CD8-positive, alpha-beta T cell (primary cell): ENCODE measurements at regions of chr19 and their contacts with region 1.

Region 1: GRCh38 chr19:55407800-55408532 is 378 bp upstream of the UBE2S start:
- DNase-seq: peak; percentile 94 to 100 (median 96)
- ATAC-seq: peak; percentile 88
- H3K4me3 ChIP-seq: peak overlapping the region; percentile 64 to 70
- H3K4me3 Mint-ChIP-seq: peak overlapping the region; percentile 95
- H3K27ac ChIP-seq: peak overlapping the region; percentile 98 to 99
- H3K27ac Mint-ChIP-seq: peak overlapping the region; percentile 99
- H3K4me1 ChIP-seq: peaks cover 21% of the 10 kb centered on the region
- H3K4me1 Mint-ChIP-seq: peaks cover 27% of the 10 kb centered on the region
- H3K27me3 ChIP-seq: no peaks in the 10 kb centered on the region
- H3K27me3 Mint-ChIP-seq: no peaks in the 10 kb centered on the region
- CTCF ChIP-seq: no peak

Region 2: GRCh38 chr19:54709212-54709948 is 698.6 kb before region 1 on chr19:
- CTCF ChIA-PET with region 1: no interaction called
- POLR2A ChIA-PET with region 1: no interaction called
- intact Hi-C with region 1: no loop called
- DNase-seq: no peak
- ATAC-seq: no peak
- H3K4me3 ChIP-seq: no peak overlapping the region
- H3K4me3 Mint-ChIP-seq: no peak overlapping the region
- H3K27ac ChIP-seq: no peak overlapping the region
- H3K27ac Mint-ChIP-seq: no peak overlapping the region
- H3K4me1 ChIP-seq: peaks cover 8% of the 10 kb centered on the region
- H3K4me1 Mint-ChIP-seq: peaks cover 11% of the 10 kb centered on the region
- H3K27me3 ChIP-seq: peaks cover 0 to 2% of the 10 kb centered on the region in 2 experiments
- H3K27me3 Mint-ChIP-seq: peaks cover 18% of the 10 kb centered on the region
- CTCF ChIP-seq: no peak

Region 3: DNA sequence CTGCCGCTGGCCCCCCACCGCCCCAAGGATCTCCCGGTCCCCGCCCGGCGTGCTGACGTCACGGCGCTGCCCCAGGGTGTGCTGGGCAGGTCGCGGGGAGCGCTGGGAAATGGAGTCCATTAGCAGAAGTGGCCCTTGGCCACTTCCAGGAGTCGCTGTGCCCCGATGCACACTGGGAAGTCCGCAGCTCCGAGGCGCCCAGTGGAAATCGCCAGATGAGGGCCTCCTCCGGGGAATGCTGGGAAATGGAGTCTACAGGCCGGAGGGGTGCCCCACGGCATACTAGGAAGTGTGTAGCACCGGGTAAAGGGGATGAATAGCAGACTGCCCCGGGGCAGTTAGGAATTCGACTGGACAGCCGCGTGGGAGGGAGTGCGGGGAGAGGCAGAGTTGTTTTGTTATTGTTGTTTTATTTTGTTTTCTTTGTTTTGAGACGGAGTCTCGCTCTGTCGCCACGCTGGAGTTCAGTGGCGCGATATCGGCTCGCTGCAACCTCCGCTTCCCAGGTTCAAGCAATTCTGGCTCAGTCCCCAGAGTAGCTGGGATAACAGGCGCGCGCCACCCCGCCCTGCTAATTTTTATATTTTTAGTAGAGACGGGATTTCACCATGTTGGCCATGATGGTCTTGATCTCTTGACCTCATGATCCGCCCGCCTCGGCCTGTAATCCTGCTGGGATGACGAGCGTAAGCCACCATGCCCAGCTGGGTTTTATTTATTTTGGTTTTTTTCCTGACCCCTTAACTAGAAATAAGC is 290.2 kb before region 1 on chr19 and contains the start of gene PPP1R12C:
- CTCF ChIA-PET with region 1: no interaction called
- POLR2A ChIA-PET with region 1: interaction called, 3 read pairs
- intact Hi-C with region 1: loop called in 1 of 2 experiments (anchors 1 kb)
- DNase-seq: peak; percentile 89 to 99 (median 97)
- ATAC-seq: peak; percentile 89
- H3K4me3 ChIP-seq: peak within 1 kb of the TSS; percentile 83 to 89
- H3K4me3 Mint-ChIP-seq: peak within 1 kb of the TSS; percentile 97
- H3K27ac ChIP-seq: peak within 1 kb of the TSS; percentile 61 to 84
- H3K27ac Mint-ChIP-seq: peak within 1 kb of the TSS; percentile 93
- H3K4me1 ChIP-seq: peaks cover 19% of the 10 kb centered on the region
- H3K4me1 Mint-ChIP-seq: peaks cover 34% of the 10 kb centered on the region
- H3K27me3 ChIP-seq: no peaks in the 10 kb centered on the region
- H3K27me3 Mint-ChIP-seq: no peaks in the 10 kb centered on the region
- CTCF ChIP-seq: no peak
- total RNA-seq, gene PPP1R12C: 93.8 to 97.6 TPM

Region 4: DNA sequence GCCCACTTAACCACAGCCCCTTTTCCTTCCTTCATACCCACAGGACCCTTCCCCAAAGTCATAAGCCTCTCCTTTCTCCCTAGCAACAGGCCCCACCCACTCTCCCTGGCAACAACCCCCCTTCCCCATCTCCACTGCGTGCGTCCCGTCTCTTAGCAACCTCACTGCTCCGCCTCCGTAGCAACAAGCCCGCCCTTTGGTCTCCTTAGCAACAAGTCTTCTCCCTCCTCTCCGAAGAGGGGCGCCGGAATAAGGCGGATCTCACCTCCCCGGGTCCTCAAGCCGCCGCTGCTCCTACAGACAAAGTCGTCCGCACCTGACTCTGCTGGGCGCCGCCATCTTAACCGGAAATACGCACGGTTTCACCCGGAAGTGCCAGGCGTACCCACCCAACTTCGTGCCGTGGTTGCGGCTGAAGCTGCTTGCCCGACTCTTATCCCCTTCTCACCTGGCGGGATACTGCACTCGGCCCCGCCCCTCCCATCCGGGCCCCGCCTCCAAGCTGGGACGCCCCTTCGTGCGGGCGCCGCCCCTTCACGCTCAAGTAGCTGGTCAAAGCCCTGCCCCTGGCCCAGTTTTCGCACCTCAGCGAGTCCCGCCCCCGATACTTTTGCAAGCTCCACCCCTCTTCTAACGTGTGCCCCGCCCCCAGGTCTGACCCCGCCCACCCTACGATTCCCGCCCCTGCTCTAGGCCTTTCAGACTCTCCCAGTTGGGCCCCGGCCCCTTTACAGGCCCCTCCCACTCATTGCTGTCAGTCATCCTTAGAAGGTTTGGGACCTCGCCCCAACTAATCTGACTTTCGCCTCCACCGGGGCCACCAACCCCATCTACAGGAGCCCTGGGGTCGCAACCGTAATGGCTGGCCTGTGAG is 128.0 kb before region 1 on chr19 and contains the start of gene HSPBP1:
- CTCF ChIA-PET with region 1: interaction called, 3 read pairs
- POLR2A ChIA-PET with region 1: interaction called, 4 read pairs
- intact Hi-C with region 1: loop called (anchors 1 to 5 kb)
- DNase-seq: peak; percentile 87 to 98 (median 95)
- ATAC-seq: peak; percentile 86
- H3K4me3 ChIP-seq: peak within 1 kb of the TSS; percentile 73 to 85
- H3K4me3 Mint-ChIP-seq: peak within 1 kb of the TSS; percentile 96
- H3K27ac ChIP-seq: peak within 1 kb of the TSS; percentile 89 to 90
- H3K27ac Mint-ChIP-seq: peak within 1 kb of the TSS; percentile 98
- H3K4me1 ChIP-seq: peaks cover 32% of the 10 kb centered on the region
- H3K4me1 Mint-ChIP-seq: peaks cover 44% of the 10 kb centered on the region
- H3K27me3 ChIP-seq: no peaks in the 10 kb centered on the region
- H3K27me3 Mint-ChIP-seq: no peaks in the 10 kb centered on the region
- CTCF ChIP-seq: no peak
- total RNA-seq, gene HSPBP1: 18.8 to 18.9 TPM

Region 5: GRCh38 chr19:55339048-55339888 is 68.7 kb before region 1 on chr19 and contains the start of gene KMT5C:
- CTCF ChIA-PET with region 1: no interaction called
- POLR2A ChIA-PET with region 1: interaction called, 19 read pairs
- intact Hi-C with region 1: loop called (anchors 1 kb)
- DNase-seq: peak; percentile 100
- ATAC-seq: peak; percentile 75
- H3K4me3 ChIP-seq: peak within 1 kb of the TSS; percentile 67 to 80
- H3K4me3 Mint-ChIP-seq: peak within 1 kb of the TSS; percentile 94
- H3K27ac ChIP-seq: peak within 1 kb of the TSS; percentile 94 to 100
- H3K27ac Mint-ChIP-seq: peak within 1 kb of the TSS; percentile 95
- H3K4me1 ChIP-seq: peaks cover 24% of the 10 kb centered on the region
- H3K4me1 Mint-ChIP-seq: peaks cover 20% of the 10 kb centered on the region
- H3K27me3 ChIP-seq: peaks cover 0 to 6% of the 10 kb centered on the region in 2 experiments
- H3K27me3 Mint-ChIP-seq: peaks cover 6% of the 10 kb centered on the region
- CTCF ChIP-seq: no peak
- total RNA-seq, gene KMT5C: 82.0 to 84.4 TPM

Region 6: GRCh38 chr19:55418185-55418584 is 10.2 kb after region 1 on chr19:
- CTCF ChIA-PET with region 1: interaction called, 16 read pairs
- POLR2A ChIA-PET with region 1: interaction called, 3 read pairs
- intact Hi-C with region 1: no loop called
- DNase-seq: peak in 8 of 9 experiments; percentile 25 to 78 (median 54)
- ATAC-seq: peak; percentile 54
- H3K4me3 ChIP-seq: no peak overlapping the region
- H3K4me3 Mint-ChIP-seq: no peak overlapping the region
- H3K27ac ChIP-seq: no peak overlapping the region
- H3K27ac Mint-ChIP-seq: no peak overlapping the region
- H3K4me1 ChIP-seq: peaks cover 18% of the 10 kb centered on the region
- H3K4me1 Mint-ChIP-seq: peaks cover 23% of the 10 kb centered on the region
- H3K27me3 ChIP-seq: no peaks in the 10 kb centered on the region
- H3K27me3 Mint-ChIP-seq: no peaks in the 10 kb centered on the region
- CTCF ChIP-seq: peak; percentile 68

Region 7: GRCh38 chr19:55476100-55476775 is 68.3 kb after region 1 on chr19 and contains the start of gene ZNF628:
- CTCF ChIA-PET with region 1: no interaction called
- POLR2A ChIA-PET with region 1: interaction called, 7 read pairs
- intact Hi-C with region 1: loop called (anchors 1 to 2 kb)
- DNase-seq: peak; percentile 95 to 99 (median 98)
- ATAC-seq: peak; percentile 93
- H3K4me3 ChIP-seq: peak within 1 kb of the TSS; percentile 70 to 72
- H3K4me3 Mint-ChIP-seq: peak within 1 kb of the TSS; percentile 85
- H3K27ac ChIP-seq: peak within 1 kb of the TSS; percentile 58 to 91
- H3K27ac Mint-ChIP-seq: peak within 1 kb of the TSS; percentile 88
- H3K4me1 ChIP-seq: peaks cover 17% of the 10 kb centered on the region
- H3K4me1 Mint-ChIP-seq: peaks cover 34% of the 10 kb centered on the region
- H3K27me3 ChIP-seq: no peaks in the 10 kb centered on the region
- H3K27me3 Mint-ChIP-seq: no peaks in the 10 kb centered on the region
- CTCF ChIP-seq: no peak
- total RNA-seq, gene ZNF628: 27.0 to 27.8 TPM

Region 8: DNA sequence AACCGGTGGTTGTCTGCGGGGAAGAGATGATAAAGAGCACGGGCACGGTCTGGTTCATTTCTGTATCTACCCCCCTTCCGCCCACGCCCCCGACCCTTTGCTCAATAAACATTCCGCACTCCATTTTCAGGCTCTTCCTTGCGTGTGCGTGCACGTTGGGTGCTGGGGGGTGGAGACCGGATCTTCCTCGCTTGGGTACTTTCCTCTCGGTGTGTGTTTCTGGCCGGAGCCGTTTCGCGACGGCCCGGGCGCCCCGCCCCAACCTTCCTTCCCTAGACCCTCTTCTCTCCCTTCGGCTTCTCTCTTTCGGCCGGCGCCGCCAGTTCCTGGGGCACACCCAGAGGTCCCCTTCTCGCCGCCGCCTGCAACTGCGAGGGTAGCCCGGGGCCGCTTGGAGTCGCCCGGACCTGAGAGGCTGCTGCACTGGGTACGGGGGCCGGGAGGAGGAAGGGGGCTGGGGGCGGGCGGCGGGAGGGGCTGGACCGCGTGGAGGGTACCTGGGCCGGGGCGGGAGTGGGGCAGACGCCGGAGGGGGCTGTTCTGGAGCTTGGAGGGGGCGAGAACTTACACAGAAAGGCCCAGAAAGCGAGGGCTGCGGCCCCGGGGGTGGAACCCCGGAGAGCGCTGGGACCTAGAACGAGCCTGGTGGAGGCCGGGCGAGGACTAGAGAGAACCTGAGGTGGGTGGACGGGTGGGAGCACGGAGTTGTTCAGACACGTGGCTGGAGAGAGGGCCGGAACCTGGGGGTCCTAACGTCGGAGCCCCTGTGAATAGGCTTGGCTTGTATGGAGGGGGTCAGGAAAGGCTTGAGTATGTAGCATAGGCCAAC is 235.6 kb after region 1 on chr19 and contains the start of gene ZNF581:
- CTCF ChIA-PET with region 1: no interaction called
- POLR2A ChIA-PET with region 1: no interaction called
- intact Hi-C with region 1: loop called (anchors 5 kb)
- DNase-seq: peak; percentile 53 to 91 (median 77)
- ATAC-seq: peak; percentile 55
- H3K4me3 ChIP-seq: peak within 1 kb of the TSS; percentile 66 to 73
- H3K4me3 Mint-ChIP-seq: peak within 1 kb of the TSS; percentile 95
- H3K27ac ChIP-seq: peak within 1 kb of the TSS; percentile 65 to 79
- H3K27ac Mint-ChIP-seq: peak within 1 kb of the TSS; percentile 97
- H3K4me1 ChIP-seq: peaks cover 42% of the 10 kb centered on the region
- H3K4me1 Mint-ChIP-seq: peaks cover 55% of the 10 kb centered on the region
- H3K27me3 ChIP-seq: no peaks in the 10 kb centered on the region
- H3K27me3 Mint-ChIP-seq: no peaks in the 10 kb centered on the region
- CTCF ChIP-seq: no peak
- total RNA-seq, gene ZNF581: 25.6 to 25.7 TPM

Region 9: GRCh38 chr19:55820037-55820436 is 412.1 kb after region 1 on chr19:
- CTCF ChIA-PET with region 1: no interaction called
- POLR2A ChIA-PET with region 1: no interaction called
- intact Hi-C with region 1: no loop called
- DNase-seq: no peak
- ATAC-seq: no peak
- H3K4me3 ChIP-seq: no peak overlapping the region
- H3K4me3 Mint-ChIP-seq: no peak overlapping the region
- H3K27ac ChIP-seq: no peak overlapping the region
- H3K27ac Mint-ChIP-seq: no peak overlapping the region
- H3K4me1 ChIP-seq: no peaks in the 10 kb centered on the region
- H3K4me1 Mint-ChIP-seq: no peaks in the 10 kb centered on the region
- H3K27me3 ChIP-seq: peaks cover 0 to 3% of the 10 kb centered on the region in 2 experiments
- H3K27me3 Mint-ChIP-seq: peaks cover 14% of the 10 kb centered on the region
- CTCF ChIP-seq: no peak